Activated B cell treated with CpG ODN at 0.5 μM for 24 hours (primary cell): ENCODE measurements at regions of chr1 and their contacts with region 1.

Region 1: DNA sequence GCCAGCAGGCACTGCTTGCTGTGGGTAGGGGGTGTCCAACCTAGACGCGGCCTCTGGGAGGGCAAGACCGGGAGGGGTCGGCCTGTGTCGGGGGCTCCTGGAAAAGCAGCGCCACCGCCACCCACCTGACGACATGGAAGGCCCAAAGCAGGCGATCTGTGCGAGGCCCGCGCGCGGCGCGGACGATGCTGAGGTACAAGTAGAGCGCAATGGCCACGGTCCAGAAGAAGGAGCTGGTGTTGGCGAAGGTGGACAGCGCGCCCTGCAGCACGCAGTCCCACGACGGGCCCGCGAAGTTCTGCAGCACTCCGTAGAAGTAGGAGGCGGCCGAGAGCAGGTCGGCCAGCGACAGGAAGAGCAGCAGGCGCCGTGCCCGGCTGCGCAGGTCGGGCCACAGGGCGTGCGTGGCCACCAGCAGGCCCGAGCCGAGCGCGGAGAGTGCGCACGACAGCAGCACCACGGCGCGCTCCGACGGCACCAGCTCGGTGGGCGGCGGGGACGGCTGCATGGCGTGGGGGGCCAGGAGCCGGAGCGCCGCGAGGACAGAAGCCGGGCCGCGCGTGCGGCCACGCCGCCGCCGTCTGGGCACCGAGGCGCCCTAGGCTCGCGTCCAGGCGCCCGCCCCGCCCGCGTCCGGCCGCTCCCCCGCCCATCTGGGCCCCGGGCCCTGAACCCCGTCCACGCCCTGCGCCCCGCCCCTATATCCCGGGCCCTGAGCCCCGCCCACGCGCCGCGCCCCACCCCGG is at the start of gene GPR157:
- DNase-seq: peak; percentile 75
- ATAC-seq: peak; percentile 87
- H3K4me3 Mint-ChIP-seq: peak within 1 kb of the TSS; percentile 90
- H3K27ac Mint-ChIP-seq: peak within 1 kb of the TSS; percentile 56
- H3K4me1 Mint-ChIP-seq: peaks cover 49% of the 10 kb centered on the region
- H3K27me3 Mint-ChIP-seq: no peaks in the 10 kb centered on the region
- CTCF ChIP-seq: no peak
- total RNA-seq, gene GPR157: 6.2 and 7.0 TPM in 2 replicates

Region 2: GRCh38 chr1:8817406-8818324 is 311.0 kb before region 1 on chr1 and contains the start of gene RERE:
- CTCF ChIA-PET with region 1: no interaction called
- POLR2A ChIA-PET with region 1: no interaction called
- intact Hi-C with region 1: loop called (anchors 2 kb)
- DNase-seq: peak; percentile 99
- ATAC-seq: peak; percentile 93
- H3K4me3 Mint-ChIP-seq: peak within 1 kb of the TSS; percentile 94
- H3K27ac Mint-ChIP-seq: peak within 1 kb of the TSS; percentile 96
- H3K4me1 Mint-ChIP-seq: peaks cover 42% of the 10 kb centered on the region
- H3K27me3 Mint-ChIP-seq: no peaks in the 10 kb centered on the region
- CTCF ChIP-seq: no peak
- total RNA-seq, gene RERE: 90.5 and 98.8 TPM in 2 replicates

Region 3: DNA sequence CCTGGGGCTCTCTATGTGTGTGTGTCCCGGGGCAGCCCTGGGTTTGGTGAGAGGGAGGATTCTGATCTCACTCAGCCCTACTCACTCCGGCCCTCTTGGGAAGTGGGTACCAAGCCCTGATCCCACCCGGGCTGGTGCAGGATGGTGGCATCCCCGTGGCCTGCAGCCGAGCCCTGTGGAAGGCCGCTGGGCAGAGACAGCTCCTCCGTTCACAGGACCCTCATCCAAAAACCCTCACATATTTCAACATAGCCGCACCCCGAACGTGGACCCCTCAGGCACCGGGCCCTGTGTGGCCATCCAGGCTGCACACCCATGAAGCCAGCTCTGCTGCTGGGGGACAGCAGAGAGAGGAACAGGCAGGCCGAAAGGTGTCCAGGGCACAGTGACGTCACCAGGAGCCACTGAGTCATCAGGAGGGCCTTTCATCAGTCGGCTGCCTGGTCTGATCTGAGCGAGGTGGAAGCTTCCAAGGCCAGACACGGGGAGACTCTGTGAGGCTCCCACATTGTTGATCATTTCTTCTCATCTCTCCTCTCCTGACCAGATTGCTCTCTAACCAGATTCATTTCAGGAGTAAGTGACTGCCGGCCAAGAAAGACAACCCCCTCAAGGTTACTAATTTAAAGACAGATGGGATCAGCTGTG is 16.5 kb after region 1 on chr1:
- CTCF ChIA-PET with region 1: interaction called, 11 read pairs
- POLR2A ChIA-PET with region 1: interaction called, 3 read pairs
- intact Hi-C with region 1: no loop called
- DNase-seq: no peak
- ATAC-seq: no peak
- H3K4me3 Mint-ChIP-seq: no peak overlapping the region
- H3K27ac Mint-ChIP-seq: no peak overlapping the region
- H3K4me1 Mint-ChIP-seq: peaks cover 3% of the 10 kb centered on the region
- H3K27me3 Mint-ChIP-seq: peaks cover 3% of the 10 kb centered on the region
- CTCF ChIP-seq: no peak

Region 4: DNA sequence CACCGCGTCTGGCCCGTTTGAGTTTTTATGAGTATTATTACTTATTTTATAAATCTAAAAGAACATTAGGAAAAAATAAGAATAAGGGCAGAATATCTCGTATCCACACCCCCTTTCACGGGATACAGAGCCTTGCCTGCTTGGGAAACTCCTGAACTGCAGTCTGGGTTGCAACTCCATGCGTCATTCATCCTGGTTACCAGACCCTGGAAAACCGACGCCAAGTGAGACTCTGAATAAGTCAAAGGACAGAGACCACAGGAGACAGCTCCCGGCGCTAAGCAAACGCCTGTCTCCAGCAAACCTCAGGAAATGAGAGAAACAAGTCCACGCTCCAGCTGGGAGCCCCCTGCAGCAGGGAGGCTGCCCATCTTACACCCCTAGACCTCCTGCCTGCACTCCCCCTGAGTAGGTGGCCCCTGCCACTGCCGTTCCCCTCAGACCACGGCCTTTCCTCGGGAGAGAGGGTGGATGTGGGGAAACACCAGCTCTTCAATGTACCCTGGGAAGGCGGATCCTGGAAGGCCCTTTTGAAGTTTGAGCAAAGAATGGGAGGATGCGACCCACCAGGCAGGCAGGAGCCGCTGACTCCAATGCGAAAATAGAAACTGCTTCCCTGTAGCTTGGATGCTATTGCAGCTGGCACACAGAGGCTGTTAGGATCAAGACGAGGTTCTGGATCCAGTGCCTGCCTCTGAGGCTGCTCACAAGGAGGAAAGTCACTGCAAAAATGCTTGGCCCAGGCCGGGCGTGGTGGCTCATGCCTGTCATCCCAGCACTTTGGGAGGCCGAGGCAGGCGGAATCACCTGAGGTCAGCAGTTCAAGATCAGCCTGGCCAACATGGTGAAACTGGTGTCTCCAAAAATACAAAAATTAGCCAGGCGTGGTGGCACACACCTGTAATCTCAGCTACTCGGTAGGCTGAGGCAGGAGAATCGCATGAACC is 37.9 kb after region 1 on chr1:
- CTCF ChIA-PET with region 1: interaction called, 4 read pairs
- POLR2A ChIA-PET with region 1: interaction called, 6 read pairs
- intact Hi-C with region 1: loop called (anchors 5 kb)
- DNase-seq: no peak
- ATAC-seq: no peak
- H3K4me3 Mint-ChIP-seq: no peak overlapping the region
- H3K27ac Mint-ChIP-seq: no peak overlapping the region
- H3K4me1 Mint-ChIP-seq: peaks cover 28% of the 10 kb centered on the region
- H3K27me3 Mint-ChIP-seq: no peaks in the 10 kb centered on the region
- CTCF ChIP-seq: no peak

Region 5: DNA sequence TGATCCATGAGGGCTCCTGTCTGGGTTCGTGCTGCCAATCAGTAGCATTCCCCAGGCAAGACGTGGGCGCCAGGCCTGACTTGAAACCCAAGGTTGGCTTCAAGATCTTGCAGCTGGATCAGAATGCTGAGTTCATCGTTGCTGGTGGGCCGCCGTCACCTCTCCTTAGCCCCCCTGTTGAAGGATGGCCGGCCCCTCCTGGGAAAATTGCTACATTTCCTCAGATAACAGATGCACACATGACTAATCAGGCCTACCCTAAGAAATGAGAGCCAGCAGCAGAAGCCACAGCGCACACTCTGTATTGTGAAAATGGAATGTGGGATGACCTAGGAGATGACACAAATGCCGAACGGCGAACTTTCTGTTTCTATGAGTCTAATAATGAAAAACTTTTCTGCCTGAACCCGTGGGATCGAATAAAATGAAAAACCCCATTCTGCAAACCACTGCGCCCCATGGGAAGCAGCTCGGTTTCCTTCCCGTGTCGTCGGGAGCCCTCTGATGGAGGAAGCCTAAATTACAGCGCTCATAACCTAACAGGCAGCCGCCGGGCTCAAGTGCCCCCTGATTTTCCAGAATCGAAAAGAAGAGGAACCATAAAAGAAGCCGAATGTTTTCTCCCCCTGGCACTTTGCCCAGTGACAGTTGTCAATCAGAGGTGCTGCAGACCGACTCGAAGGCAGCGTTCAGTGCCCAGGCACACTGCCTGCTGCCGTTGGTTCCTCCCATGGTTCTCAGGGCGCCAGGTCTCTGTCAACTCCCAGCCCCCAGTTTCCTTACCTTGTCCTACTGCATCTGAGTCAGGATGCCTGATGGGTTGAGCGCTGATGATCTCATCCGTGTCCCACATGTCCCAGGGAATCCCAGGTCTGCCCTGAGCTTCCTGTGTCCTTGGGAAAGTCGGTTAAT is 67.7 kb after region 1 on chr1:
- CTCF ChIA-PET with region 1: interaction called, 5 read pairs
- POLR2A ChIA-PET with region 1: no interaction called
- intact Hi-C with region 1: loop called (anchors 1 kb)
- DNase-seq: peak; percentile 51
- ATAC-seq: peak; percentile 82
- H3K4me3 Mint-ChIP-seq: peak overlapping the region; percentile 57
- H3K27ac Mint-ChIP-seq: no peak overlapping the region
- H3K4me1 Mint-ChIP-seq: peaks cover 16% of the 10 kb centered on the region
- H3K27me3 Mint-ChIP-seq: peaks cover 33% of the 10 kb centered on the region
- CTCF ChIP-seq: no peak

Region 6: GRCh38 chr1:9234223-9235095 is 105.8 kb after region 1 on chr1 and contains the start of gene H6PD:
- CTCF ChIA-PET with region 1: no interaction called
- POLR2A ChIA-PET with region 1: interaction called, 12 read pairs
- intact Hi-C with region 1: loop called (anchors 1 kb)
- DNase-seq: peak; percentile 82
- ATAC-seq: peak; percentile 82
- H3K4me3 Mint-ChIP-seq: peak within 1 kb of the TSS; percentile 92
- H3K27ac Mint-ChIP-seq: peak within 1 kb of the TSS; percentile 94
- H3K4me1 Mint-ChIP-seq: peaks cover 34% of the 10 kb centered on the region
- H3K27me3 Mint-ChIP-seq: no peaks in the 10 kb centered on the region
- CTCF ChIP-seq: no peak
- total RNA-seq, gene H6PD: 20.3 and 21.9 TPM in 2 replicates